ENCODE measurements at regions of chr2 and their contacts with region 1.

Region 1: GRCh38 chr2:8495189-8495989 is 186.5 kb upstream of the ID2 start:
- DNase-seq: no peak
- H3K4me3 ChIP-seq: no peak overlapping the region
- H3K27ac ChIP-seq: no peak overlapping the region
- H3K27me3 ChIP-seq: no peaks in the 10 kb centered on the region
- CTCF ChIP-seq: no peak

Region 2: GRCh38 chr2:8416849-8417832 is 78.2 kb before region 1 on chr2:
- CTCF ChIA-PET with region 1: interaction called, 10 read pairs
- POLR2A ChIA-PET with region 1: no interaction called
- DNase-seq: peak; percentile 13
- H3K4me3 ChIP-seq: no peak overlapping the region
- H3K27ac ChIP-seq: no peak overlapping the region
- H3K27me3 ChIP-seq: no peaks in the 10 kb centered on the region
- CTCF ChIP-seq: no peak

Measured in AG04450 (cell line).